K562 (cell line): ENCODE measurements at regions of chr2 and their contacts with region 1.

Region 1: DNA sequence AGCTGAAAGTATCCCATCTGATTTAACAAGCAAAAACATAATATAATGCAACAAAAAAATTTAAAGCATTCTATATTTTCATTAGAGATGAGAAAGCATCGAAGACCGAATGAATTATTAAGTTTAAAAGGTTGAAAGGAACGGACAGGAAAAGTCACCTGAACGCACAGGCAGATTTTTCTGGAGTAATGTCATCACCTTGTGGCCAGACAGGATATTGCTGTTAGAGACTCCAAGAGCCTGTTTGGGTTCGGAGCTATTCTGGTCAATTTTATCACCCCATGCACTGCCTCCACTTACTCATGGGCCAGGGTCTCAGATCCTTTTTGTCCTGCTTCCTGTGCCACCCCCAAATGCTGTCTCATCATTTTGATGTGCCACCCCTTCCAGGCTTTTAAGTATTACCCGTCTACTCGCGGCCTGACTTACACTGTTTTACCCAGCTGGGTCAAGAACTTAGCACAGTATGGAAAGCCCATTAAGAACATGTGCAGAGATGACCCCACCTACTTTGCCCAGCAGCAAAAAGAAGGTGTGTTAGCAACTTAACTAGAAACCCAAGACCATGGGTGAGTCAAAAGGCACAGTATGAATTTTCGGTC is 27.3 kb downstream of the GKN2 start:
- DNase-seq: peak; percentile 61 to 73 (median 66)
- ATAC-seq: peak; percentile 91
- H3K4me3 ChIP-seq: no peak overlapping the region
- H3K27ac ChIP-seq: no peak overlapping the region
- H3K4me1 ChIP-seq: no peaks in the 10 kb centered on the region
- H3K27me3 ChIP-seq: peaks cover 2 to 9% of the 10 kb centered on the region in 2 experiments; a peak in 2 of 5 replicates
- CTCF ChIP-seq: peak; percentile 87 to 98 (median 94)
- EP300 ChIP-seq: no peak; the same call in 1 of the 2 replicates
- POLR2A ChIP-seq: no peak
- RAD21 ChIP-seq: peak; percentile 99

Region 2: GRCh38 chr2:68467077-68467960 is 458.1 kb before region 1 on chr2 and contains the starts of genes APLF and FBXO48:
- CTCF ChIA-PET with region 1: interaction called, 9 read pairs
- POLR2A ChIA-PET with region 1: interaction called, 4 read pairs
- in situ Hi-C with region 1: no loop called
- intact Hi-C with region 1: loop called (anchors 2 kb)
- DNase-seq: peak; percentile 87 to 99 (median 92)
- ATAC-seq: peak; percentile 97
- H3K4me3 ChIP-seq: peak within 1 kb of the TSS; percentile 76
- H3K27ac ChIP-seq: peak within 1 kb of the TSS; percentile 85
- H3K4me1 ChIP-seq: peaks cover 8 to 30% of the 10 kb centered on the region in 2 experiments; a peak in 4 of 5 replicates
- H3K27me3 ChIP-seq: no peaks in the 10 kb centered on the region; a peak in 1 of 5 replicates
- CTCF ChIP-seq: no peak
- EP300 ChIP-seq: peak; percentile 13; the same call in 1 of the 2 replicates
- POLR2A ChIP-seq: peak; percentile 79
- RAD21 ChIP-seq: no peak
- polyA plus RNA-seq, gene APLF: 0.07 to 0.15 TPM
- polyA plus RNA-seq, gene FBXO48: 0.74 to 0.79 TPM

Region 3: DNA sequence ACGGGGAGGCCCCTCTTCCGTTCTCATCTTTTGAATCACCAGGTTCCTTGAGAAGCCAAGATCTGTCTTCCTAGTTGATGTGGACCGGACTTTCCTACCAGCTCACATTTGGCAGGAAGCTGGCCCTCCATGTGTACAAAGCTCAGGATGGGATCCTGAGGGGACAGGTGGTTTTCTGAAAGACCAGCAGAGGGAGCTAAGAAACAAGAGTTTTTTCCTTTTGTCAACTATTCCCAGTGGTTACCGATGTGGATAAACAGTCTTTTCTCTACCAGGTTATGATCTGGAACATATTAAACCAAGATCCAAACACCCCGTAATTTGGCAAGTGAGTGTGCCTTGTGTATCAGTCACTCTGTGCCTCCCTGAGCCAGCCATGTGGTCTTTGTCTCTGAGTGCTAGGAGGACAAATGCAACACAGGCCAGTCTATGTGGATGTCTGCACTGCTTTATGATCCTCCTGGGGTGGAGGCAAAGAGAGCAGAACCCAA is 215.9 kb before region 1 on chr2:
- CTCF ChIA-PET with region 1: interaction called, 22 read pairs
- POLR2A ChIA-PET with region 1: interaction called, 3 read pairs
- in situ Hi-C with region 1: no loop called
- intact Hi-C with region 1: loop called (anchors 5 kb)
- DNase-seq: peak; percentile 25 to 62 (median 43)
- ATAC-seq: peak; percentile 94
- H3K4me3 ChIP-seq: no peak overlapping the region
- H3K27ac ChIP-seq: no peak overlapping the region
- H3K4me1 ChIP-seq: no peaks in the 10 kb centered on the region; a peak in 1 of 5 replicates
- H3K27me3 ChIP-seq: no peaks in the 10 kb centered on the region; a peak in 1 of 5 replicates
- CTCF ChIP-seq: peak; percentile 56 to 81 (median 76); a peak in 5 of 6 replicates
- EP300 ChIP-seq: no peak
- POLR2A ChIP-seq: no peak
- RAD21 ChIP-seq: peak; percentile 75 to 83

Region 4: GRCh38 chr2:68742626-68743415 is 182.6 kb before region 1 on chr2:
- CTCF ChIA-PET with region 1: interaction called, 3 read pairs
- POLR2A ChIA-PET with region 1: no interaction called
- in situ Hi-C with region 1: loop called (anchors 10 kb)
- intact Hi-C with region 1: no loop called
- DNase-seq: no peak
- ATAC-seq: no peak
- H3K4me3 ChIP-seq: no peak overlapping the region
- H3K27ac ChIP-seq: no peak overlapping the region
- H3K4me1 ChIP-seq: peaks cover 0 to 19% of the 10 kb centered on the region in 2 experiments; a peak in 3 of 5 replicates
- H3K27me3 ChIP-seq: no peaks in the 10 kb centered on the region
- CTCF ChIP-seq: no peak
- EP300 ChIP-seq: no peak
- POLR2A ChIP-seq: no peak
- RAD21 ChIP-seq: no peak

Region 5: GRCh38 chr2:68751397-68752339 is 173.7 kb before region 1 on chr2:
- CTCF ChIA-PET with region 1: interaction called, 24 read pairs
- POLR2A ChIA-PET with region 1: no interaction called
- in situ Hi-C with region 1: loop called (anchors 10 kb)
- intact Hi-C with region 1: loop called (anchors 1 kb)
- DNase-seq: peak; percentile 76 to 87 (median 77)
- ATAC-seq: peak; percentile 98
- H3K4me3 ChIP-seq: no peak overlapping the region
- H3K27ac ChIP-seq: no peak overlapping the region
- H3K4me1 ChIP-seq: peaks cover 0 to 12% of the 10 kb centered on the region in 2 experiments; a peak in 2 of 5 replicates
- H3K27me3 ChIP-seq: no peaks in the 10 kb centered on the region
- CTCF ChIP-seq: peak; percentile 91 to 95 (median 95)
- EP300 ChIP-seq: no peak
- POLR2A ChIP-seq: no peak
- RAD21 ChIP-seq: peak; percentile 91 to 95

Region 6: DNA sequence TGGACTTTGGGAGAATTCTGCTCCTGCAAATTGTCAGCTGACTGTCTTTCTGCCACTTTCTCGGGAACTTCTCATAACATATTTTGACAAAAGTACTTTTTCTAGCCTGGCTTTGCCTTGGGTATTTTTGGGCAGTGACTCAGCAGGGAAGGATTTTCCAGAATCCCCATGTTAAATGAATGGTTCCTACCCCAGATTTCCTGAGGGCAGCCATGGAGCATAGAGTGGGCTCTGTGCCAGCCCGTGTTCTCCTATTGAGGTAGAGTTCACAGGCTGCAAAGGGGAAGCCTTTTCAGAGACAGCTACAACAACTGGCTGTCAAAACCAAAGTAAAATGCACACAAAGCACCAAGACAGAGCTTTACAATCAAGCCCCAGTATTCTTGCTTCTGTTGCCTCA is 114.0 kb before region 1 on chr2:
- CTCF ChIA-PET with region 1: interaction called, 19 read pairs
- POLR2A ChIA-PET with region 1: interaction called, 3 read pairs
- in situ Hi-C with region 1: no loop called
- intact Hi-C with region 1: no loop called
- DNase-seq: no peak
- ATAC-seq: no peak
- H3K4me3 ChIP-seq: no peak overlapping the region
- H3K27ac ChIP-seq: no peak overlapping the region
- H3K4me1 ChIP-seq: peaks cover 0 to 5% of the 10 kb centered on the region in 2 experiments; a peak in 2 of 5 replicates
- H3K27me3 ChIP-seq: no peaks in the 10 kb centered on the region
- CTCF ChIP-seq: no peak
- EP300 ChIP-seq: no peak
- POLR2A ChIP-seq: no peak
- RAD21 ChIP-seq: no peak

Region 7: GRCh38 chr2:68832233-68832869 is 93.0 kb before region 1 on chr2:
- CTCF ChIA-PET with region 1: no interaction called
- POLR2A ChIA-PET with region 1: interaction called, 3 read pairs
- in situ Hi-C with region 1: no loop called
- intact Hi-C with region 1: loop called (anchors 1 kb)
- DNase-seq: peak; percentile 29 to 77 (median 50)
- ATAC-seq: peak; percentile 71
- H3K4me3 ChIP-seq: no peak overlapping the region
- H3K27ac ChIP-seq: peak overlapping the region; percentile 78
- H3K4me1 ChIP-seq: peaks cover 23 to 64% of the 10 kb centered on the region in 2 experiments
- H3K27me3 ChIP-seq: no peaks in the 10 kb centered on the region
- CTCF ChIP-seq: no peak
- EP300 ChIP-seq: no peak; the same call in 1 of the 2 replicates
- POLR2A ChIP-seq: 0 out of 2 replicates have a peak, but pooled peaks have one; percentile 42
- RAD21 ChIP-seq: no peak

Region 8: DNA sequence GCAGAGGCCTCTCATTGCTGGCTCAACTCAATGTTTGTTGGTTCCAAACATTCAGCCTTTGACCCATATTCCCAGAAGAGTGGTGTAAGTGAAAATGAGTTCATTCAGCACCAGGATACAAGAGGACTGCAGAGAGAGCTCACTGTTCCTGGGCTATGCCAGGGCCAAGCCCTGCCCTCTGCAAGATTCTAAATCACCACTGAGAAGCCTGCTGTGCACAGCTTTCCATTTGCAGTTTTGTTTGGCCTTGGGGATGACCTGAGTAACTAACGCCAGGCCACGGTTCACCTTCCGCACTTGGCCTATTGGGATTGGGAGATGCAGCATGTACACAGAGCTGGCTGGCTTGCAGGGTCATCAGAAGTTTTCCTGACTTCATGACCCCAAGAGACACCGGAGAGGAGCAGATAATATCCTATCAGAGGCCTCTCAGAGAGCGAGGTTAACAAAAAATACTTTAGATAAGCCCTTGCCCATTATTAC is 61.7 kb after region 1 on chr2:
- CTCF ChIA-PET with region 1: no interaction called
- POLR2A ChIA-PET with region 1: no interaction called
- in situ Hi-C with region 1: no loop called
- intact Hi-C with region 1: no loop called
- DNase-seq: no peak
- ATAC-seq: no peak
- H3K4me3 ChIP-seq: no peak overlapping the region
- H3K27ac ChIP-seq: no peak overlapping the region
- H3K4me1 ChIP-seq: no peaks in the 10 kb centered on the region
- H3K27me3 ChIP-seq: peaks cover 0 to 16% of the 10 kb centered on the region in 2 experiments; a peak in 4 of 5 replicates
- CTCF ChIP-seq: no peak
- EP300 ChIP-seq: no peak; the same call in 1 of the 2 replicates
- POLR2A ChIP-seq: no peak
- RAD21 ChIP-seq: no peak

Region 9: DNA sequence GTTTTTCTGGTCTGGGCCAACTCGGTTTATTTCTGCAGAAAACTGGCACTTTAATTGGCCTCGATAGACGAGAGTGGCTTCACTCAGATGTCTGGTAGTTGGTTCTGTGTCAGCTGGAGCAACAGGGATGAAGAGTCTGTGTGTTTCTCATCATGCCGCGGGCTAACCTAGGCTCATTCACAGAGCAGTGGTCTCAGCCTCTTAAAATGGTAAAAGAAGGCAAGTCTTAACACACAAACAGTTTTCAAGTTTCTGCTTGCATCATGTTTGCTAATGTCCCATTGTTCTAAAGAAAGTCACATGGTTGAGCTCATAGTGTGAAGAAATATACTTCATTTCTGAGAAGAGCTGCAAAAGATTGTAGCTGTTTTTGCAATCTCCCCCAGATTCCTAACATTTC is 779.0 kb after region 1 on chr2:
- CTCF ChIA-PET with region 1: no interaction called
- POLR2A ChIA-PET with region 1: no interaction called
- in situ Hi-C with region 1: no loop called
- intact Hi-C with region 1: no loop called
- DNase-seq: no peak
- ATAC-seq: no peak
- H3K4me3 ChIP-seq: no peak overlapping the region
- H3K27ac ChIP-seq: no peak overlapping the region
- H3K4me1 ChIP-seq: no peaks in the 10 kb centered on the region
- H3K27me3 ChIP-seq: no peaks in the 10 kb centered on the region
- CTCF ChIP-seq: no peak
- EP300 ChIP-seq: no peak
- POLR2A ChIP-seq: no peak
- RAD21 ChIP-seq: no peak